ENCODE measurements at regions of chr14 and their contacts with region 1.

Region 1: DNA sequence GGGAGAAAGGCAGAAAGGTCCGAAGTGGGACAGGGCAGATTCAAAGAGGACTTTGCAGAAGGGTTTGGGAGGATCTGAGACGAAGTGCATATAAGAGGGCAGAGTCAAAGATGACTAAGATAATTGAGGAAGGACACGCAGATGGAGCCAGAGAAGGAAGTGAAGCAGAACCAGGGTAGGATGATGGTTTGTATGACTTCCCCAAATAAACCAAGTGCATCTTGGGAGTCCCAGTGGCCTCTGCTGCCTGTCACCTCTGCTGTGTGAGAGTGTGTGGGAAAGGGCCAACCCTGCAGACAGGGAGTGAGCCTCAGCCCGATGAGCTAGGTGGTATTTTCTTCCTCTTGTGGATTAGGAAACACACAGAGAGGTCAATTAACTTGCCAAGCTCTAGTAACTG is 36.8 kb downstream of the FLVCR2 start:
- H3K4me3 Mint-ChIP-seq: peak overlapping the region; percentile 27
- H3K27ac Mint-ChIP-seq: peak overlapping the region; percentile 94
- H3K4me1 Mint-ChIP-seq: peaks cover 89% of the 10 kb centered on the region
- H3K27me3 Mint-ChIP-seq: no peaks in the 10 kb centered on the region

Region 2: GRCh38 chr14:75560962-75561432 is 54.2 kb before region 1 on chr14:
- intact Hi-C with region 1: no loop called
- H3K4me3 Mint-ChIP-seq: no peak overlapping the region
- H3K27ac Mint-ChIP-seq: no peak overlapping the region
- H3K4me1 Mint-ChIP-seq: peaks cover 30% of the 10 kb centered on the region
- H3K27me3 Mint-ChIP-seq: no peaks in the 10 kb centered on the region

Region 3: GRCh38 chr14:75604856-75605851 is 10.0 kb before region 1 on chr14:
- intact Hi-C with region 1: loop called (anchors 2 kb)
- H3K4me3 Mint-ChIP-seq: peak overlapping the region; percentile 78
- H3K27ac Mint-ChIP-seq: peak overlapping the region; percentile 94
- H3K4me1 Mint-ChIP-seq: peaks cover 85% of the 10 kb centered on the region
- H3K27me3 Mint-ChIP-seq: no peaks in the 10 kb centered on the region

Region 4: GRCh38 chr14:75654127-75654732 is 39.0 kb after region 1 on chr14:
- intact Hi-C with region 1: no loop called
- H3K4me3 Mint-ChIP-seq: no peak overlapping the region
- H3K27ac Mint-ChIP-seq: no peak overlapping the region
- H3K4me1 Mint-ChIP-seq: peaks cover 23% of the 10 kb centered on the region
- H3K27me3 Mint-ChIP-seq: no peaks in the 10 kb centered on the region

Measured in dendritic cell treated with granulocyte-macrophage colony-stimulating factor and Interleukin-4, amounts not matched to agents 40 ng/mL and 50 ng/mL, for 4 days (primary cell).